ENCODE measurements at regions of chr10 and their contacts with region 1.

Region 1: GRCh38 chr10:112955582-112956421 is 5.8 kb downstream of the TCF7L2 start:
- DNase-seq: peak; percentile 56
- H3K4me3 Mint-ChIP-seq: peak overlapping the region; percentile 76
- H3K27ac Mint-ChIP-seq: peak overlapping the region; percentile 87
- H3K4me1 Mint-ChIP-seq: peaks cover 67% of the 10 kb centered on the region
- H3K27me3 Mint-ChIP-seq: no peaks in the 10 kb centered on the region
- CTCF ChIP-seq: no peak

Region 2: DNA sequence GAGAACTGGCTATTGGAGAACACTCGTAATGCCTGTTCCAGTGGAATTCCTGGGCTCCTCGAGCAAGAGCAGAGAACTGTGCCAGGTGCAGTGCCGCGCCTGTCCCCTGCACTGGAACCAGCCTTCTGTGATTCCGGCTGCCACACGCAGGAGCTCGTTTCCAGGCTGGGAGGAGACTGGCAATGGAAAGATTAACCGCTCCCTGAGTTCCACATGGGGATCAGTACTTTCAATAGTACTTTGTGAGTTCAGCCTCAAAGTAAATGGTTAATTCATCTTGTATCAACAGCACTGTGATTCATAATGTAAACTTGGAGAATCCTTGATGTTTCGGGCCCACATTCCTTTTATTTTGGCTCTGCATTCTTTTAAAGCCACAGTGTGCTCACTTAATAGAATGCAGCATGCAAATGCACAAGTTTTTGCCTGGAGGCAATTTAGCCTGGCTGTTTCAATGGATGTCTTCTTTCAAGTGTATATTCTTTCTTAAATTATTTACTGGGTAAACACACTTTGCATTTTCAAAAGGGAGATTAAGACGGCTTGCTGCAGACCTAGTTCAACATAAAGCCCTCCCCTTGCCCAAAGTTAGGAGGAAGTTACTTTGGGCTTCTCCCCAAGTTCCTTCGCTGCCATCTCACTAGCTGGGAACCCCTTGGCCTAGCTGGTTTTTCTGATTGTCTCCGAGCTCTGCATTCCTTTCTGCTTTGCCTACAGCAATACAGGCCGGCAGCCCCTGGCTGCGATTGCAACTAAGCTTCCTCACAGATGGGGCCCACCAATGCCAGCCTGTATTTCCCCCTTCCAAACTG is 143.9 kb before region 1 on chr10:
- CTCF ChIA-PET with region 1: interaction called, 3 read pairs
- POLR2A ChIA-PET with region 1: interaction called, 11 read pairs
- intact Hi-C with region 1: loop called (anchors 5 kb)
- DNase-seq: peak; percentile 89
- H3K4me3 Mint-ChIP-seq: peak overlapping the region; percentile 65
- H3K27ac Mint-ChIP-seq: peak overlapping the region; percentile 87
- H3K4me1 Mint-ChIP-seq: peaks cover 35% of the 10 kb centered on the region
- H3K27me3 Mint-ChIP-seq: no peaks in the 10 kb centered on the region
- CTCF ChIP-seq: no peak

Region 3: GRCh38 chr10:112991888-112992581 is 36.2 kb after region 1 on chr10:
- CTCF ChIA-PET with region 1: interaction called, 5 read pairs
- POLR2A ChIA-PET with region 1: interaction called, 26 read pairs
- intact Hi-C with region 1: no loop called
- DNase-seq: peak; percentile 86
- H3K4me3 Mint-ChIP-seq: peak overlapping the region; percentile 50
- H3K27ac Mint-ChIP-seq: peak overlapping the region; percentile 49
- H3K4me1 Mint-ChIP-seq: peaks cover 23% of the 10 kb centered on the region
- H3K27me3 Mint-ChIP-seq: no peaks in the 10 kb centered on the region
- CTCF ChIP-seq: no peak

Region 4: GRCh38 chr10:113099431-113100293 is 143.9 kb after region 1 on chr10:
- CTCF ChIA-PET with region 1: interaction called, 3 read pairs
- POLR2A ChIA-PET with region 1: interaction called, 15 read pairs
- intact Hi-C with region 1: no loop called
- DNase-seq: peak; percentile 86
- H3K4me3 Mint-ChIP-seq: peak overlapping the region; percentile 32
- H3K27ac Mint-ChIP-seq: peak overlapping the region; percentile 53
- H3K4me1 Mint-ChIP-seq: peaks cover 15% of the 10 kb centered on the region
- H3K27me3 Mint-ChIP-seq: no peaks in the 10 kb centered on the region
- CTCF ChIP-seq: no peak